Activated naive CD4-positive, alpha-beta T cell treated with anti-CD3 and anti-CD28 coated beads for 36 hours (primary cell): ENCODE measurements at regions of chr9 and their contacts with region 1.

Region 1: DNA sequence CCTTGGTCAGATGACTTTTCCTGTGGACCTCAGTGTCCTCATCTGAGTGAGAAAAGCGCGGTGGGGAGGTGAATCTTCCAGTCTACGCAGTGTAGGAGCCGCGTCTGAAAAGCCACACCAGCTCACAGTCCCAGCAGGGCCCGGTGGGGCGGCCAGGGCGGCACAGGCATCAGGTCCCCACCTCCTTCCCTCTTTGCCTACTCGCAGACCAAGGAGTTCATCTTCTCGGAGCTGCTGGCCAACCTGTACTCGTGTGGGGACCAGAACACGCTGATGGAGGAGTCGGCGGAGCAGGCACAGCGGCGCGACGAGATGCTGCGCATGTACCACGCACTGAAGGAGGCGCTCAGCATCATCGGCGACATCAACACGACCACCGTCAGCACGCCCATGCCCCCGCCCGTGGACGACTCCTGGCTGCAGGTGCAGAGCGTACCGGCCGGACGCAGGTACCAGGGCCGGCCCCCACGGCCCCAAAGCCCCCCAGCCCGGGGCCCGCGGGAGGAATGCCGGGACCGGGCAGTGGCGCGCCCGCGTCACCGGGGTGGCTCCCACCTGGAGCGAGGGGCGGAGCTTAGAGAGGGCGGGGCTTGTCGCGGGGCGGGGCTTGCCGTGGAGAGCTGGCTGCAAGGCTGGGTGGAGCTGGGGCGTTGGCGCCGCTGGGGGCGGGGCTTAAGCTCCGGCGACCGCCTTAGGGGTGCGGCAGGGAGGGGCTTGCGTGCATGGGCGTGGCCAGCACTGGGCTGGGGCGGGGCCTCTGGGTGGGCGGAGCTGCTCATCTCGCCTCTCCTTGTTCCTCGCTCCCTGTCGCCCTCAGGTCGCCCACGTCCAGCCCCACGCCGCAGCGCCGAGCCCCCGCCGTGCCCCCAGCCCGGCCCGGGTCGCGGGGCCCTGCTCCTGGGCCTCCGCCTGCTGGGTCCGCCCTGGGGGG is 25.6 kb downstream of the GOLGA2 start:
- DNase-seq: peak; percentile 98
- H3K4me3 Mint-ChIP-seq: peak overlapping the region; percentile 77
- H3K27ac Mint-ChIP-seq: no peak overlapping the region
- H3K4me1 Mint-ChIP-seq: peaks cover 14% of the 10 kb centered on the region
- H3K27me3 Mint-ChIP-seq: peaks cover 10% of the 10 kb centered on the region

Region 2: GRCh38 chr9:128218518-128219389 is 31.4 kb before region 1 on chr9:
- CTCF ChIA-PET with region 1: no interaction called
- intact Hi-C with region 1: loop called (anchors 1 kb)
- DNase-seq: peak; percentile 99
- H3K4me3 Mint-ChIP-seq: peak overlapping the region; percentile 77
- H3K27ac Mint-ChIP-seq: no peak overlapping the region
- H3K4me1 Mint-ChIP-seq: peaks cover 13% of the 10 kb centered on the region
- H3K27me3 Mint-ChIP-seq: no peaks in the 10 kb centered on the region

Region 3: GRCh38 chr9:128322404-128323211 is 72.4 kb after region 1 on chr9 and contains the starts of genes COQ4 and TRUB2:
- CTCF ChIA-PET with region 1: no interaction called
- intact Hi-C with region 1: loop called (anchors 1 kb)
- DNase-seq: peak; percentile 95
- H3K4me3 Mint-ChIP-seq: peak within 1 kb of the TSS; percentile 90
- H3K27ac Mint-ChIP-seq: peak within 1 kb of the TSS; percentile 94
- H3K4me1 Mint-ChIP-seq: peaks cover 22% of the 10 kb centered on the region
- H3K27me3 Mint-ChIP-seq: no peaks in the 10 kb centered on the region
- total RNA-seq, gene COQ4: 27.8 to 29.6 TPM
- total RNA-seq, gene TRUB2: 28.0 to 29.4 TPM